CD8-positive, alpha-beta T cell (primary cell): ENCODE measurements at regions of chr17 and their contacts with region 1.

Region 1: GRCh38 chr17:39777534-39778365 is 40.0 kb downstream of the GRB7 start:
- DNase-seq: peak in 2 of 9 experiments; percentile 54 to 71
- ATAC-seq: peak; percentile 46
- H3K4me3 ChIP-seq: peak overlapping the region; percentile 50 to 64
- H3K4me3 Mint-ChIP-seq: peak overlapping the region; percentile 89
- H3K27ac ChIP-seq: peak overlapping the region; percentile 52 to 84
- H3K27ac Mint-ChIP-seq: peak overlapping the region; percentile 97
- H3K4me1 ChIP-seq: peaks cover 87% of the 10 kb centered on the region
- H3K4me1 Mint-ChIP-seq: peaks cover 85% of the 10 kb centered on the region
- H3K27me3 ChIP-seq: no peaks in the 10 kb centered on the region
- H3K27me3 Mint-ChIP-seq: no peaks in the 10 kb centered on the region
- CTCF ChIP-seq: no peak

Region 2: GRCh38 chr17:39794249-39794970 is 16.7 kb after region 1 on chr17:
- CTCF ChIA-PET with region 1: interaction called, 19 read pairs
- POLR2A ChIA-PET with region 1: interaction called, 20 read pairs
- intact Hi-C with region 1: loop called (anchors 1 to 2 kb)
- DNase-seq: peak in 4 of 9 experiments; percentile 28 to 73 (median 45)
- ATAC-seq: peak; percentile 67
- H3K4me3 ChIP-seq: peak overlapping the region in 1 of 2 experiments; percentile 1
- H3K4me3 Mint-ChIP-seq: peak overlapping the region; percentile 65
- H3K27ac ChIP-seq: peak overlapping the region; percentile 3 to 78
- H3K27ac Mint-ChIP-seq: peak overlapping the region; percentile 89
- H3K4me1 ChIP-seq: peaks cover 72% of the 10 kb centered on the region
- H3K4me1 Mint-ChIP-seq: peaks cover 75% of the 10 kb centered on the region
- H3K27me3 ChIP-seq: no peaks in the 10 kb centered on the region
- H3K27me3 Mint-ChIP-seq: no peaks in the 10 kb centered on the region
- CTCF ChIP-seq: no peak

Region 3: GRCh38 chr17:39822051-39822451 is 44.3 kb after region 1 on chr17:
- CTCF ChIA-PET with region 1: interaction called, 8 read pairs
- POLR2A ChIA-PET with region 1: interaction called, 18 read pairs
- intact Hi-C with region 1: loop called in 1 of 2 experiments (anchors 2 kb)
- DNase-seq: peak in 2 of 9 experiments; percentile 39 to 58
- ATAC-seq: no peak
- H3K4me3 ChIP-seq: no peak overlapping the region
- H3K4me3 Mint-ChIP-seq: no peak overlapping the region
- H3K27ac ChIP-seq: peak overlapping the region in 1 of 2 experiments; percentile 88
- H3K27ac Mint-ChIP-seq: peak overlapping the region; percentile 92
- H3K4me1 ChIP-seq: peaks cover 45% of the 10 kb centered on the region
- H3K4me1 Mint-ChIP-seq: peaks cover 50% of the 10 kb centered on the region
- H3K27me3 ChIP-seq: no peaks in the 10 kb centered on the region
- H3K27me3 Mint-ChIP-seq: no peaks in the 10 kb centered on the region
- CTCF ChIP-seq: no peak

Region 4: GRCh38 chr17:39845052-39845846 is 67.5 kb after region 1 on chr17:
- CTCF ChIA-PET with region 1: no interaction called
- POLR2A ChIA-PET with region 1: interaction called, 4 read pairs
- intact Hi-C with region 1: loop called in 1 of 2 experiments (anchors 5 kb)
- DNase-seq: peak in 1 of 9 experiments; percentile 30
- ATAC-seq: no peak
- H3K4me3 ChIP-seq: no peak overlapping the region
- H3K4me3 Mint-ChIP-seq: no peak overlapping the region
- H3K27ac ChIP-seq: no peak overlapping the region
- H3K27ac Mint-ChIP-seq: peak overlapping the region; percentile 89
- H3K4me1 ChIP-seq: peaks cover 81% of the 10 kb centered on the region
- H3K4me1 Mint-ChIP-seq: peaks cover 76% of the 10 kb centered on the region
- H3K27me3 ChIP-seq: no peaks in the 10 kb centered on the region
- H3K27me3 Mint-ChIP-seq: no peaks in the 10 kb centered on the region
- CTCF ChIP-seq: no peak

Region 5: DNA sequence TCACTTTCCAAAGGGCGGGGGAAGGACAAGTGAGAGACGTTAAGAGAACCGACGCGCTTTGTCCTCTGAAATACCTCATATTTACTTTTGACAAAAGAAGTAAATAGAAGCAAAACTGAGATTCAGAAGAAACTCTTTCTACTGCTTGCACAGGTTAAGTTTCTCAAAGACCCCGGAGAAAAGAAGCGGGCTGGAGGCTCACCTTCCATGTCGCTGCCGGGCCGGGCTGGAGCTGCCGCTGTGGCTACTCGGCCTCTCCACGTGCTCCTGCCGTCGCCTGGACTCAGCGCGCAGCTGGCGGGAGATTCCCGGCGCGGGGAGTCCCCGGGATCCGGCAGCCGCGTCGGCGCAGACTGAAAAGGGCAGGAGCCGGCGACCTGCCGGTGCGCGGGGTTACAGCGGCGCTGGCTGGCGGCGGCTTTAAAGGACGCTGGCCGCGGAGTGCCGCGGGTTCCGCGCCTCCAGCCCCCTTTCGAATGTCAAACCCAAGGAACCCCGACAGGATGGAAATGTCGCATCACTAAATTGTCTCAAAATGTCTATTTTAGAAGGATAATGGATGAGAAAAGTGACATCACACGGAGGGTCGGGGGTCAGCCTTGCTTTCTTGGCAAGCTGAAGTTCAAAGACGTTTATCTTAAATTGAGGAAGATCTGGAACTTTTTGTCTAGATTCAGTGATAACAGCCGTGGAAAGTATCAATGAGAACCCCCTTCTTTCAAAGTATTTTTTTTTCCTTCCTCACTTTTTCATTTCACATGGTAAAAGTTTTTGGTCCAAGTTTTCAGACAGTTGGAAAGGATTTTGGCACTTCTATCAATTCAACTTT is 86.4 kb after region 1 on chr17 and contains the start of gene IKZF3:
- CTCF ChIA-PET with region 1: interaction called, 5 read pairs
- POLR2A ChIA-PET with region 1: interaction called, 4 read pairs
- intact Hi-C with region 1: loop called (anchors 2 to 5 kb)
- DNase-seq: peak; percentile 59 to 96 (median 78)
- ATAC-seq: peak; percentile 67
- H3K4me3 ChIP-seq: peak within 1 kb of the TSS; percentile 65 to 74
- H3K4me3 Mint-ChIP-seq: peak within 1 kb of the TSS; percentile 89
- H3K27ac ChIP-seq: peak within 1 kb of the TSS; percentile 92 to 94
- H3K27ac Mint-ChIP-seq: peak within 1 kb of the TSS; percentile 98
- H3K4me1 ChIP-seq: peaks cover 56% of the 10 kb centered on the region
- H3K4me1 Mint-ChIP-seq: peaks cover 61% of the 10 kb centered on the region
- H3K27me3 ChIP-seq: no peaks in the 10 kb centered on the region
- H3K27me3 Mint-ChIP-seq: no peaks in the 10 kb centered on the region
- CTCF ChIP-seq: peak; percentile 49
- total RNA-seq, gene IKZF3: 57.3 to 59.8 TPM